Tibial artery (tissue), 4 donors: ENCODE measurements at regions of chr14 and their contacts with region 1.

Region 1: GRCh38 chr14:94356379-94357056 is 31.9 kb downstream of the SERPINA1 start:
- DNase-seq: no peak
- H3K4me3 ChIP-seq: no peak overlapping the region
- H3K27ac ChIP-seq: no peak overlapping the region
- H3K4me1 ChIP-seq: no peaks in the 10 kb centered on the region
- H3K27me3 ChIP-seq: peaks cover 0 to 4% of the 10 kb centered on the region in 2 donors
- CTCF ChIP-seq: no peak

Region 2: DNA sequence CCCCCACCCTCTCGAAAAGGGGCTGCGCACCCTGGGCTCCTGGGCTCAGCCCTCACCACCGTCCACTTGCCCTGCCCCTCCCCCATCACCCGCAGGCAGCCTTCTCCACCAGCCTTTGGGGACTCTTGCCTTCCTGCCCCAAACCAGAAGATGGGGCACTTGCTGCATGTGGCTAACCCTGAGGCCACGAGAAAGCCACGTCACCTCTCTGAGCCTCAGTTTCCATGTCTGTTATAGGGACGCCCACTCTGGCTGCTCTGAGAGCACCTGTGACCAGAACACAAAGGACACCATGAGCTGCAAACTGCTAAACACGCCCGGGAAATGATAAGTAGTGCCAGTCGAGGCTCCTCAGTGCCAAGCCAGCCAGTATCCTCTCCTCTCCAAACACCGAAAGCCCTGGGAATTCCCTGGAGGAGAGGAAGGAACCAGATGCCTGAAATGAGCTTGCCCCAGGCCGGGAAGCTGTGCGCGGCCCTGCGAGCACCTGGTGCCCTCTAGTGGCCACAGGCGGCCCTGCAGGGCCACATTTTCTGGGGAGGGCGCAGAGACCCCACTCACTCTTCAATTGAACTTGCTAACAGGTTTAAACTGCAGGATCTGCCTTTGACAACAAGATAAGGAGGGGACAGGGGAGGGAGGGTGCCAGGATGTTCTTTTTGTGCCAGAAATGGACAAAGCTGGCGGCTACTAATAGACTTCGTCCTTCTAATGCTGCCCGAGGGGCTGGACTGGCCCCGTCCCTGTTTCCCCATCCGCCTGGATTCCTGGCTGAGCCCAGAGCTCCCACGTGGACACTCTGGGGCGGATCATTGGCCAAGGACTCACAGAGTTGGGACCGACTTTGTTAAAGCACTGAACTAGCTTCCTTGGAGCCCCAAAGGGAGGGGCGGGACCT is 129.7 kb after region 1 on chr14:
- intact Hi-C with region 1: loop called (anchors 2 kb)
- DNase-seq: peak in 1 of 2 donors; percentile 31
- H3K4me3 ChIP-seq: no peak overlapping the region
- H3K27ac ChIP-seq: no peak overlapping the region
- H3K4me1 ChIP-seq: peaks cover 0 to 11% (median 6%) of the 10 kb centered on the region in 4 donors
- H3K27me3 ChIP-seq: peaks cover 0 to 16% of the 10 kb centered on the region in 2 donors
- CTCF ChIP-seq: peak; percentile 88 to 99